ENCODE measurements at regions of chr10 and their contacts with region 1.

Region 1: DNA sequence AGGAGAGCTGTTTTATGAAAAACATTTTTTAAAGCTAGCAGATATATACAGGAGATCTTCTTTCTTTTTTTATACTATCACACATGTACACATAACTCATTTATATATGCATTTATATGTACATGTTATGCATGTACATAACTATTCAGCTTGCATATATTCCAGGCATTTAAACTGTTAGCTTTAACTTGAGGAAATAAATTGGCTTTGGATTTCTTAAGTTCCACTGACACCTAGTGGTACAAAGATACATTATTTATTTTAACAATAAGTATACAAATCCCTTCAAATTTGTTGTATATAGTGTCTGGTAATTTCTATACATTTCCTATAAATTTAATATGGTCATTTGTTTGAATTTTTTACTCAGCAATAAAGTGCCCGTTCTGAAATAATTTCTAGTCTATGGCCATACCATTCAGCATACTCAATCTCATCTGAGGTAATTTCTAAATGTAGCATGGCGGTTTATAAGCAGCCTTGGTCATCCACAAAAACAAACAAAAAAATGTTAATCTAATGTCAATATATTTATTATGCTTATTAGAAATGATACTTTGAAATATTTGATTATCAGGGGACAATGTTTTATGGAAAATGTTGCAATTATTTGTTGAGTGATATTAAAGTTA is 11.6 kb downstream of the ZDHHC6 start:
- H3K4me3 ChIP-seq: no peak overlapping the region
- H3K27ac ChIP-seq: no peak overlapping the region
- H3K4me1 ChIP-seq: no peaks in the 10 kb centered on the region
- CTCF ChIP-seq: no peak

Region 2: GRCh38 chr10:112314822-112315474 is 120.2 kb before region 1 on chr10:
- CTCF ChIA-PET with region 1: interaction called, 12 read pairs
- POLR2A ChIA-PET with region 1: no interaction called
- H3K4me3 ChIP-seq: no peak overlapping the region
- H3K27ac ChIP-seq: no peak overlapping the region
- H3K4me1 ChIP-seq: no peaks in the 10 kb centered on the region
- CTCF ChIP-seq: peak; percentile 71; the same call in 1 of the 2 replicates

Region 3: GRCh38 chr10:112345202-112345601 is 89.9 kb before region 1 on chr10:
- CTCF ChIA-PET with region 1: no interaction called
- POLR2A ChIA-PET with region 1: no interaction called
- H3K4me3 ChIP-seq: no peak overlapping the region
- H3K27ac ChIP-seq: no peak overlapping the region
- H3K4me1 ChIP-seq: no peaks in the 10 kb centered on the region
- CTCF ChIP-seq: no peak

Region 4: GRCh38 chr10:112446055-112446854 is 11.2 kb after region 1 on chr10:
- CTCF ChIA-PET with region 1: interaction called, 12 read pairs
- POLR2A ChIA-PET with region 1: interaction called, 6 read pairs
- H3K4me3 ChIP-seq: peak overlapping the region; percentile 99
- H3K27ac ChIP-seq: peak overlapping the region; percentile 89
- H3K4me1 ChIP-seq: peaks cover 5% of the 10 kb centered on the region
- CTCF ChIP-seq: no peak